ENCODE measurements at regions of chr5 and their contacts with region 1.

Region 1: GRCh38 chr5:132293066-132293991 is 865 bp upstream of the SLC22A4 start:
- DNase-seq: peak; percentile 77 to 92 (median 87)
- H3K4me3 ChIP-seq: peak overlapping the region; percentile 74 to 88 (median 77)
- H3K4me3 Mint-ChIP-seq: peak overlapping the region; percentile 96 to 98
- H3K27ac ChIP-seq: peak overlapping the region; percentile 96 to 98
- H3K27ac Mint-ChIP-seq: peak overlapping the region; percentile 99 to 100 (median 99)
- H3K4me1 ChIP-seq: peaks cover 54 to 73% of the 10 kb centered on the region in 2 donors
- H3K4me1 Mint-ChIP-seq: peaks cover 58% of the 10 kb centered on the region
- H3K27me3 ChIP-seq: no peaks in the 10 kb centered on the region
- H3K27me3 Mint-ChIP-seq: no peaks in the 10 kb centered on the region
- CTCF ChIP-seq: no peak

Region 2: GRCh38 chr5:132363431-132364112 is 70.2 kb after region 1 on chr5:
- intact Hi-C with region 1: loop called in 1 of 2 experiments (anchors 5 kb)
- DNase-seq: peak in 2 of 3 donors; percentile 47 to 62
- H3K4me3 ChIP-seq: no peak overlapping the region
- H3K4me3 Mint-ChIP-seq: no peak overlapping the region
- H3K27ac ChIP-seq: peak overlapping the region in 1 of 2 donors; percentile 85
- H3K27ac Mint-ChIP-seq: peak overlapping the region; percentile 58 to 96 (median 94)
- H3K4me1 ChIP-seq: peaks cover 15 to 19% of the 10 kb centered on the region in 2 donors
- H3K4me1 Mint-ChIP-seq: peaks cover 20% of the 10 kb centered on the region
- H3K27me3 ChIP-seq: no peaks in the 10 kb centered on the region
- H3K27me3 Mint-ChIP-seq: no peaks in the 10 kb centered on the region
- CTCF ChIP-seq: no peak

Region 3: GRCh38 chr5:132866342-132867045 is 573.2 kb after region 1 on chr5 and contains the starts of genes GDF9 and UQCRQ:
- intact Hi-C with region 1: loop called in 1 of 2 experiments (anchors 10 kb)
- DNase-seq: peak; percentile 99 to 100 (median 100)
- H3K4me3 ChIP-seq: peak within 1 kb of the TSS; percentile 47 to 87 (median 78)
- H3K4me3 Mint-ChIP-seq: peak within 1 kb of the TSS; percentile 96 to 99
- H3K27ac ChIP-seq: peak within 1 kb of the TSS; percentile 92 to 97
- H3K27ac Mint-ChIP-seq: peak within 1 kb of the TSS; percentile 94 to 100 (median 99)
- H3K4me1 ChIP-seq: peaks cover 14 to 33% of the 10 kb centered on the region in 2 donors
- H3K4me1 Mint-ChIP-seq: peaks cover 19% of the 10 kb centered on the region
- H3K27me3 ChIP-seq: no peaks in the 10 kb centered on the region
- H3K27me3 Mint-ChIP-seq: peaks cover 3 to 4% (median 4%) of the 10 kb centered on the region in 3 donors
- CTCF ChIP-seq: no peak
- polyA plus RNA-seq, gene GDF9: 0.55 TPM in 1 of 3 donors, not detected in the others
- polyA plus RNA-seq, gene UQCRQ: 81.6 to 880 (median 879) TPM